ENCODE measurements at regions of chr1 and their contacts with region 1.

Region 1: GRCh38 chr1:34786521-34787325 is 5.7 kb downstream of the GJB3 start:
- DNase-seq: peak; percentile 87
- H3K4me3 ChIP-seq: no peak overlapping the region
- H3K27ac ChIP-seq: no peak overlapping the region
- H3K4me1 ChIP-seq: no peaks in the 10 kb centered on the region
- H3K27me3 ChIP-seq: peaks cover 6% of the 10 kb centered on the region
- CTCF ChIP-seq: peak; percentile 77

Region 2: DNA sequence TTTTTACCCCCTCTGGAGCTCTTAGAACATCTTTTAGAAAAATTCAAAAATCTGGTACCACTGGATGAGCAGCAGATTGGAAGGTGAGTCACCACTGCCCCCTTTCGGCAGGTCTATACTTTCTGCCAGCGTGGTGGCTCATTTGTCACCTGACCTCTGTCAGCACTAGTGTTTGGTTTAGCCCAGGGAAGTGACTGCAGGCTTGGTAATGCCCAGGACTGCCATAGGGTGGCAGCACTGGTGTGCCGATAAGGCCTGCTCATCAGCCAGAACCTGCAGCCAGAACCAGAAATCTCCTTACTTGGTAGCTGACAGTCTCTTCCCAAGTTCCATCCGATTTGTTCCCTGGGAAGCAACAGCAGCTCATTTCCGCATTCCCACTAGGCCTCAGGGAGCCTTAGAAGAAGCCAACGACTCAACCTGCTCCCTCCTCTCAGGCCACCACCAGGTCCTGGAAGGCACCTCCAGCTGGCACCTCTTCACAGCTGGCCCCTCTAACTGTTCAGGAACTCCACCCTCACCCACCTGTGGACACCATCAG is 66.0 kb after region 1 on chr1:
- intact Hi-C with region 1: loop called (anchors 2 kb)
- DNase-seq: peak; percentile 93
- H3K4me3 ChIP-seq: no peak overlapping the region
- H3K27ac ChIP-seq: no peak overlapping the region
- H3K4me1 ChIP-seq: peaks cover under 1% of the 10 kb centered on the region
- H3K27me3 ChIP-seq: no peaks in the 10 kb centered on the region
- CTCF ChIP-seq: peak; percentile 95

Region 3: GRCh38 chr1:34865981-34866761 is 79.4 kb after region 1 on chr1:
- intact Hi-C with region 1: loop called (anchors 5 kb)
- DNase-seq: peak; percentile 92
- H3K4me3 ChIP-seq: peak overlapping the region; percentile 66
- H3K27ac ChIP-seq: peak overlapping the region; percentile 60
- H3K4me1 ChIP-seq: no peaks in the 10 kb centered on the region
- H3K27me3 ChIP-seq: no peaks in the 10 kb centered on the region
- CTCF ChIP-seq: peak; percentile 97